ENCODE measurements at regions of chr1 and their contacts with region 1.

Region 1: GRCh38 chr1:180533266-180533987 is 25.3 kb upstream of the OVAAL start:
- DNase-seq: peak; percentile 42
- H3K4me3 Mint-ChIP-seq: no peak overlapping the region
- H3K27ac Mint-ChIP-seq: no peak overlapping the region
- H3K4me1 Mint-ChIP-seq: no peaks in the 10 kb centered on the region
- H3K27me3 Mint-ChIP-seq: peaks cover 6% of the 10 kb centered on the region

Region 2: GRCh38 chr1:180778782-180779398 is 245.5 kb after region 1 on chr1:
- intact Hi-C with region 1: loop called (anchors 1 kb)
- DNase-seq: no peak
- H3K4me3 Mint-ChIP-seq: no peak overlapping the region
- H3K27ac Mint-ChIP-seq: no peak overlapping the region
- H3K4me1 Mint-ChIP-seq: no peaks in the 10 kb centered on the region
- H3K27me3 Mint-ChIP-seq: no peaks in the 10 kb centered on the region

Region 3: DNA sequence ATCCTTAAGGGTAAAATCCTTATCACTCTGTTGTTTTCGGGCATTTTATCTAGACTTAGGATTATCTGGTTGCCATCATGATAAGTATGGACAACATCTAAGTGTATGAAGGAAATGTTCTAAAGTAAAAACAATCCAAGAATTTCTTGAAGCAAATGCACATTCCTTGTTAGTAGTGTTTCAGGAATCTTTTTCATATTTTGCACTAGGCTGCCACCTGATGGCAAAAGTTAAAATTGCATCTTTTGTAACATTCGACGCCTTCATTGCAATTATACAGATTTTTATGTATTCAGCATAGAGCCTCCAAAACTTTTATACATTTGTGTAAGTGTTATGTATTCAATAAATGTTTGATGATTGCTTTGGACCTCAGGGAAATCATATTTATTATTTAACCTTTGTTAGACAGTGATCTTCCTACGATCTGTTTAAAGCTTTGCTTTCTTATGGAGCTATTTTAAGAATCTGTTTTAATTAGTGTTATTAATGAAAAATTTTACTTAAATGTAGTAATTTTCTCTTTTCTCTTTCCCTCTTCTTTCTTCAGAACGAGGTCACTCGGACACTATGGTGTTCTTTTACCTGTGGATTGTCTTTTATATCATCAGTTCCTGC is 329.8 kb after region 1 on chr1:
- intact Hi-C with region 1: loop called (anchors 1 kb)
- DNase-seq: no peak
- H3K4me3 Mint-ChIP-seq: no peak overlapping the region
- H3K27ac Mint-ChIP-seq: no peak overlapping the region
- H3K4me1 Mint-ChIP-seq: no peaks in the 10 kb centered on the region
- H3K27me3 Mint-ChIP-seq: no peaks in the 10 kb centered on the region

Region 4: DNA sequence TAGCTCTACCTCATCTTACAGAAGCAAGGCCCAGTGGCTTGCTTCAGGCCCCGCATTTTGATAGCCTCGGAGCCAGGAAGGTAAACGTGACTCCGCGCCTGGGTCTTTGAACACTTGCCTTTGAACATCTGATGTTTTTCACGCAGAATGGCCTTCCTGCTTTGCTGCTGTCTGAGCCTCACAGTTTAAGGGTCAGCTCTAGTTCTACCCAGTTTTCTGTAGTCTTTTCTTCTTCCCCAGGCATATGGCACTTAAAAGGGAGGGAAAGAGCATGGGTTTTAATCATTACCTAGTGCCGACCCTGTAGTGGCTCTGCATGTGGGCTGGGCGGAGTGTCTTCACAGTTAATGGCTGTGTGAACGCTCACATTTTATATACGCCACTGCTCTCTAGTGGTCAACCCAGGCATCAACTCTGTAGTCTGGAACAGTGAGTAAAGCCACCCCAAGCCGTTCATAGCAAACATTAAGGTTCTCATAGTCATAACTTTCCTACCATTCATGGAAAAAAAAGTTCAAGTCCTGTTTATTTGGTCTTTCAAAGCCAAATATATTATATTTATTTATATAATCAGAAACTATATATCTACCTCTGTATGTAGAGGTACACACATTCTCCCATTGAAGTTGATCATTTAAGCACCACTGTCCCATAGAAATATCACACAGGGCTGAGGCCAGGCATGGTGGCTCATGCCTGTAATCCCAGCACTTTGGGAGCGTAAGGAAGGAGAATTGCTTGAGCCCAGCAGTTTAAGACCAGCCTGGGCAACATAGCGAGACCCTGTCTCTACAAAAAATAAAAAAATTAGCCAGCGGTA is 633.2 kb after region 1 on chr1:
- intact Hi-C with region 1: loop called (anchors 1 kb)
- DNase-seq: peak; percentile 62
- H3K4me3 Mint-ChIP-seq: no peak overlapping the region
- H3K27ac Mint-ChIP-seq: no peak overlapping the region
- H3K4me1 Mint-ChIP-seq: peaks cover 6% of the 10 kb centered on the region
- H3K27me3 Mint-ChIP-seq: peaks cover 34% of the 10 kb centered on the region

Measured in activated T-helper 1 cell treated with anti-CD3 and anti-CD28 coated beads, Interleukin-12 subunit alpha, Interleukin-12 subunit beta, Interleukin-2, Interleukin-4 antibody, amounts not matched to agents 30 ng/mL and 10 ng/mL and 1 ng/mL, durations not matched to agents 14 hours and 24 hours and 36 hours (primary cell).